Mammary epithelial cell (primary cell): ENCODE measurements at regions of chr12 and their contacts with region 1.

Region 1: GRCh38 chr12:132327351-132328171 is 1.8 kb downstream of the GALNT9 start:
- DNase-seq: peak; percentile 69
- H3K4me3 ChIP-seq: peak overlapping the region in 2 of 3 experiments; percentile 4 to 11
- H3K27ac ChIP-seq: no peak overlapping the region
- H3K4me1 ChIP-seq: peaks cover 3% of the 10 kb centered on the region
- H3K27me3 ChIP-seq: peaks cover 10% of the 10 kb centered on the region
- CTCF ChIP-seq: no peak

Region 2: GRCh38 chr12:132253698-132254480 is 73.7 kb before region 1 on chr12:
- CTCF ChIA-PET with region 1: no interaction called
- dilution Hi-C with region 1: loop called (anchors 5 kb)
- in situ Hi-C with region 1: no loop called
- intact Hi-C with region 1: no loop called
- DNase-seq: no peak
- H3K4me3 ChIP-seq: no peak overlapping the region
- H3K27ac ChIP-seq: no peak overlapping the region
- H3K4me1 ChIP-seq: no peaks in the 10 kb centered on the region
- H3K27me3 ChIP-seq: peaks cover 2% of the 10 kb centered on the region
- CTCF ChIP-seq: no peak

Region 3: GRCh38 chr12:132275110-132275531 is 52.4 kb before region 1 on chr12:
- CTCF ChIA-PET with region 1: no interaction called
- dilution Hi-C with region 1: loop called (anchors 10 kb)
- in situ Hi-C with region 1: no loop called
- intact Hi-C with region 1: no loop called
- DNase-seq: no peak
- H3K4me3 ChIP-seq: no peak overlapping the region
- H3K27ac ChIP-seq: no peak overlapping the region
- H3K4me1 ChIP-seq: no peaks in the 10 kb centered on the region
- H3K27me3 ChIP-seq: peaks cover 2% of the 10 kb centered on the region
- CTCF ChIP-seq: no peak

Region 4: GRCh38 chr12:132342251-132343227 is 15.0 kb after region 1 on chr12:
- CTCF ChIA-PET with region 1: no interaction called
- dilution Hi-C with region 1: no loop called
- in situ Hi-C with region 1: no loop called
- intact Hi-C with region 1: no loop called
- DNase-seq: no peak
- H3K4me3 ChIP-seq: no peak overlapping the region
- H3K27ac ChIP-seq: no peak overlapping the region
- H3K4me1 ChIP-seq: no peaks in the 10 kb centered on the region
- H3K27me3 ChIP-seq: no peaks in the 10 kb centered on the region
- CTCF ChIP-seq: no peak